MCF 10A (cell line): ENCODE measurements at regions of chr4 and their contacts with region 1.

Region 1: GRCh38 chr4:168585168-168586091 is 88.6 kb downstream of the PALLD start:
- DNase-seq: peak; percentile 89
- H3K4me3 Mint-ChIP-seq: no peak overlapping the region
- H3K27ac Mint-ChIP-seq: no peak overlapping the region
- H3K4me1 Mint-ChIP-seq: peaks cover 45% of the 10 kb centered on the region
- H3K27me3 Mint-ChIP-seq: no peaks in the 10 kb centered on the region
- CTCF ChIP-seq: peak; percentile 84

Region 2: DNA sequence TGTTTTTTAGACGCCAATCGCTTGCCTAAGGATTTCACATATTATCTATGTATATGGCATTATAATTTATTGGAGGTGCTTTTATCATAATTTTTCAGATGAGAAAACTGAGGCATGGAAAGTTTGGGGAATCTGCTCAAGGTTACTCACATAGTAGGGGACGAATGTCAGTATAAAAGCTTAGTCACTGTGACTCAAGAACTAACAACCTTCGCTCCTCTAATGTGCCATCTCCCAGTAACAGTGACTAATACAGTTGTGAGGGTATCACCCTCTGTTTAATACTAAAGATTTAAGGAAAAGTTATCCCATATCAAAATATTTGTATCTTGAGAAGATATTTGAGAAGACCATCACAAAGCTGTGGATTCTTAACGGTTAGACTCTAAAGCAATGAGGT is 998.1 kb before region 1 on chr4:
- CTCF ChIA-PET with region 1: no interaction called
- POLR2A ChIA-PET with region 1: no interaction called
- intact Hi-C with region 1: no loop called
- DNase-seq: no peak
- H3K4me3 Mint-ChIP-seq: no peak overlapping the region
- H3K27ac Mint-ChIP-seq: no peak overlapping the region
- H3K4me1 Mint-ChIP-seq: no peaks in the 10 kb centered on the region
- H3K27me3 Mint-ChIP-seq: no peaks in the 10 kb centered on the region
- CTCF ChIP-seq: no peak

Region 3: GRCh38 chr4:168514249-168514852 is 71.1 kb before region 1 on chr4:
- CTCF ChIA-PET with region 1: interaction called, 4 read pairs
- POLR2A ChIA-PET with region 1: interaction called, 4 read pairs
- intact Hi-C with region 1: loop called (anchors 2 kb)
- DNase-seq: peak; percentile 69
- H3K4me3 Mint-ChIP-seq: no peak overlapping the region
- H3K27ac Mint-ChIP-seq: no peak overlapping the region
- H3K4me1 Mint-ChIP-seq: peaks cover 10% of the 10 kb centered on the region
- H3K27me3 Mint-ChIP-seq: no peaks in the 10 kb centered on the region
- CTCF ChIP-seq: peak; percentile 33

Region 4: GRCh38 chr4:168604496-168605373 is 19.3 kb after region 1 on chr4:
- CTCF ChIA-PET with region 1: interaction called, 12 read pairs
- POLR2A ChIA-PET with region 1: interaction called, 49 read pairs
- intact Hi-C with region 1: no loop called
- DNase-seq: peak; percentile 94
- H3K4me3 Mint-ChIP-seq: no peak overlapping the region
- H3K27ac Mint-ChIP-seq: peak overlapping the region; percentile 4
- H3K4me1 Mint-ChIP-seq: peaks cover 45% of the 10 kb centered on the region
- H3K27me3 Mint-ChIP-seq: no peaks in the 10 kb centered on the region
- CTCF ChIP-seq: no peak

Region 5: DNA sequence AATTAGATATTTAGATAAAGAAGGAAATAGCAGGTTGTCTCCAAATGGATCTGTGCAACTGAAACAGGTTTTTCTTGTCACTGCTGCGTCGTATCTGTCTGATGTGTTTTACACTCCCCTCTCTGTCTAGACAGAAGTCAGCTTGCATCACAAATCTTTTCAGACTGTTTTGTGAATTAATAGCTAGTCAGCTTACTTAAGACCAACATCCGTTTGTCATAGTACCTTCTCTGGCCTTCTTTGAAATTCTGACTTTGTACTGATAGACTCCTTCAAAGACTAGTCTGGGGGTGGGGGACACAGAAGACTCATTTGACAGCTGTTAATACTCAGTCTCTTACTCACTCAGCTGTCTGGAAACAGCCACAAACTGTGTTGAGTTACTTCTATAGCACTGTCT is 109.2 kb after region 1 on chr4:
- CTCF ChIA-PET with region 1: interaction called, 10 read pairs
- POLR2A ChIA-PET with region 1: interaction called, 3 read pairs
- intact Hi-C with region 1: loop called (anchors 5 kb)
- DNase-seq: no peak
- H3K4me3 Mint-ChIP-seq: no peak overlapping the region
- H3K27ac Mint-ChIP-seq: no peak overlapping the region
- H3K4me1 Mint-ChIP-seq: peaks cover 6% of the 10 kb centered on the region
- H3K27me3 Mint-ChIP-seq: no peaks in the 10 kb centered on the region
- CTCF ChIP-seq: no peak

Region 6: GRCh38 chr4:168841000-168841671 is 255.7 kb after region 1 on chr4:
- CTCF ChIA-PET with region 1: interaction called, 11 read pairs
- POLR2A ChIA-PET with region 1: interaction called, 8 read pairs
- intact Hi-C with region 1: no loop called
- DNase-seq: peak; percentile 31
- H3K4me3 Mint-ChIP-seq: no peak overlapping the region
- H3K27ac Mint-ChIP-seq: no peak overlapping the region
- H3K4me1 Mint-ChIP-seq: peaks cover 61% of the 10 kb centered on the region
- H3K27me3 Mint-ChIP-seq: no peaks in the 10 kb centered on the region
- CTCF ChIP-seq: no peak

Region 7: GRCh38 chr4:168923526-168924194 is 338.2 kb after region 1 on chr4:
- CTCF ChIA-PET with region 1: interaction called, 47 read pairs
- POLR2A ChIA-PET with region 1: interaction called, 5 read pairs
- intact Hi-C with region 1: no loop called
- DNase-seq: peak; percentile 78
- H3K4me3 Mint-ChIP-seq: no peak overlapping the region
- H3K27ac Mint-ChIP-seq: no peak overlapping the region
- H3K4me1 Mint-ChIP-seq: peaks cover 6% of the 10 kb centered on the region
- H3K27me3 Mint-ChIP-seq: no peaks in the 10 kb centered on the region
- CTCF ChIP-seq: peak; percentile 71